Endothelial cell of umbilical vein (primary cell): ENCODE measurements at regions of chr6 and their contacts with region 1.

Region 1: DNA sequence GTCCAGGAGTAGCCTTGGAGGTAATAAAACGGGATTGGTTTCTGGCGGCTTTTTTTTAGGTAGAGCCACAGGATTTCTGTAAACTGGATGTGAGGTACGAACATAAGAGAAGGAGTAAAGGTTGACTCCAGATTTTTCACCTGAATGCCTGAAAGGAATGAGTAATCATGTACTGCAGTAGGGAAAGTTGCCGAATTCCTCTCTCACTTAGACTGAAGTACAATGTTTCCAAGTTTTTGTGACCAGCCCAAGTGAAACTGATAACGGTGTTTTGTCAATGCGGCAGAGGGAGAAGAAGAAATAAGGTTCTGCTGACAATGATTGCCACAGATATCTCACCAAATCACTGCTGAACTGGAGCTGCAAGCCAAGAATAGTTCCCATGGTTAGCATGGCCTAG is 75.0 kb downstream of the VTA1 start:
- DNase-seq: no peak
- H3K4me3 ChIP-seq: no peak overlapping the region
- H3K27ac ChIP-seq: no peak overlapping the region
- H3K4me1 ChIP-seq: no peaks in the 10 kb centered on the region
- H3K27me3 ChIP-seq: no peaks in the 10 kb centered on the region
- CTCF ChIP-seq: no peak
- POLR2A ChIP-seq: no peak

Region 2: DNA sequence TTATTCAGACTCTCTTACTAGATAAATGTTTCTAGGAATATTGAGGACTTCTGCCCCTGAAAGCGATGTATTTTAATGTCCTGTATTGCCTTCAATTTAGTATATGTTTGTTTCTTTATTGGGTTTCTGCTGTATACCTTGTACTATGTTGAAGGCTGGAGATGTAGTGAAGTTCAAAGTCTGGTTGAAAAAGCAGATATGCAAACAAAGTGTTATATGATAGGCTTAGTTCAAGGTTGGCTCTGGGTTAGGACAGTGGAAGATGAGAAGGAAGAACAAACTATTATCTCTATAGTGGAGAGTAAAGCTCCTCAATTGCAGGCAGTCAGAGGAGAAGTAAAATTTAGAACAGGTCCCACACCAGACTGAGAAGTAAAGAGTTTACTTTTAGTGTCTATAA is 43.5 kb after region 1 on chr6:
- CTCF ChIA-PET with region 1: no interaction called
- POLR2A ChIA-PET with region 1: no interaction called
- dilution Hi-C with region 1: no loop called
- intact Hi-C with region 1: no loop called
- DNase-seq: no peak
- H3K4me3 ChIP-seq: no peak overlapping the region
- H3K27ac ChIP-seq: no peak overlapping the region
- H3K4me1 ChIP-seq: peaks cover 3% of the 10 kb centered on the region
- H3K27me3 ChIP-seq: no peaks in the 10 kb centered on the region
- CTCF ChIP-seq: no peak
- POLR2A ChIP-seq: no peak

Region 3: DNA sequence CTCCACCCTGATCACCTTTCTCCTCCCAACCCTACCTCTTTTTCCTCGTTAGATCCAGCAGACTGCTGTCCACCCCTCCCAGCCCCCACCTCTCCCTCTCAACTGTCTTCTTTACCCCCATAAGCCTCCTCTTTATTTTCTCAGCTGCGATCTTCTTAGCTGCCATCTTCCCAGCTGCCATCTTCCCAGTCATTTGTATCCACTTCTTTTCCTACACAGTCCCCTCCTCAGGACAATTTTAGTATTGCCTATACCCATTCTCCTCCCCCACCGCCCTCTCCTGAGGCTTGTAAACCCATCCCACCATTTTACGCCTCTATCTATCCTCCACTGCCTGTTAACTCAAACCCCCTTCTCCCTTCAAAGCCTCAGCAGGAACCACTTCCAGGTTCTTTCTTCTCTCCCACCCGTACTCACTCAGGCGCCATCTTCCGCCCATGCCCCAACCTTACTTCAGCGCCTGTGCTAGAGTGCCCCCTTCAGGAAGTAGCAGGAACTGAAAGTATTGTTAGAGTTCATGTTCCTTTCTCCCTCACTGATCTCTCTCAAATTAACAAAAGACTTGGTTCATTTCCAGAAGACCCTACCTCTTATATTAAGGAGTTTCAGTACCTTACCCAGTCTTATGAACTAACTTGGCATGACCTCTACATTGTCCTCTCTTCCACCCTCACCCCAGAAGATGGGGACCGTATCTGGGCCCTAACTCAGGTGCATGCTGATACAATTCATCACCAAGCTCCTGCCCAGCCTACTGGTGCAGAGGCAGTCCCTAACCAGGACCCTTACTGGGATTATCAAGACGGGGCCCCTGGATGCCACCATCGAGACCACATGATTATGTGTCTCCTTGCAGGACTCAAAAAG is 315.8 kb after region 1 on chr6:
- CTCF ChIA-PET with region 1: no interaction called
- POLR2A ChIA-PET with region 1: no interaction called
- dilution Hi-C with region 1: no loop called
- intact Hi-C with region 1: loop called (anchors 10 kb)
- DNase-seq: peak; percentile 18
- H3K4me3 ChIP-seq: no peak overlapping the region
- H3K27ac ChIP-seq: no peak overlapping the region
- H3K4me1 ChIP-seq: no peaks in the 10 kb centered on the region
- H3K27me3 ChIP-seq: no peaks in the 10 kb centered on the region
- CTCF ChIP-seq: peak; percentile 48 to 53
- POLR2A ChIP-seq: no peak